ENCODE measurements at regions of chr6 and their contacts with region 1.

Region 1: DNA sequence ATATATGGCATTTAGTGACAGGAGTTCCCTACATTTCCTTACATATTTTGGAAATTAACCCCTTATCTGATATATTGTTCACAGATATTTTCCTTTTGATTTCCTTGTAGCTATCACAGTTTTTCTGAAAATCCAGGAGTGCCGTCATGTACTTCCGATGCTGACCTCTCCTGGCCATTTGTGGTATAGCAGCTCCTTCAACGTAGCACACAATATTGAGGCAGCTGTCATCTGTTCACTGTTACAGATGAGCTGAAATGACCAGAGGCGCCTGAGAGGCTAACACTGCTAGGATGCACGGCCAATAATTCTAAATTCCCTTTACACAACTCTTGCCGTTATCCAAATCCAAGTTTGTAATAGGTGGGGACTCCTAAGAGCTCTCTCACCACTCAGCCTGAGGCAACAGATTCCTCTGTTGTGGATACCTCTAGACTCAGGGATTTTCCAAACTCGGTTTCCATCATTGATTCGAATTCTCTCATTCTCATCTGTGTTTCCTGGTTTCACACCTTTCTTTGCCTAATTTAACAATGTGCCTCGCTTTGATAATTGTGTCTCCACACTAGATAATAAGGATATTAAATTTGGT is 53.0 kb downstream of the MMUT start:
- H3K4me3 ChIP-seq: no peak overlapping the region
- H3K27ac ChIP-seq: no peak overlapping the region
- H3K4me1 ChIP-seq: no peaks in the 10 kb centered on the region
- CTCF ChIP-seq: peak; percentile 40

Region 2: GRCh38 chr6:49423817-49424216 is 13.8 kb after region 1 on chr6:
- CTCF ChIA-PET with region 1: interaction called, 31 read pairs
- POLR2A ChIA-PET with region 1: no interaction called
- H3K4me3 ChIP-seq: no peak overlapping the region
- H3K27ac ChIP-seq: no peak overlapping the region
- H3K4me1 ChIP-seq: no peaks in the 10 kb centered on the region
- CTCF ChIP-seq: no peak

Measured in HEK293 (cell line).